Heart right ventricle (tissue), 16 donors: ENCODE measurements at regions of chr2 and their contacts with region 1.

Region 1: DNA sequence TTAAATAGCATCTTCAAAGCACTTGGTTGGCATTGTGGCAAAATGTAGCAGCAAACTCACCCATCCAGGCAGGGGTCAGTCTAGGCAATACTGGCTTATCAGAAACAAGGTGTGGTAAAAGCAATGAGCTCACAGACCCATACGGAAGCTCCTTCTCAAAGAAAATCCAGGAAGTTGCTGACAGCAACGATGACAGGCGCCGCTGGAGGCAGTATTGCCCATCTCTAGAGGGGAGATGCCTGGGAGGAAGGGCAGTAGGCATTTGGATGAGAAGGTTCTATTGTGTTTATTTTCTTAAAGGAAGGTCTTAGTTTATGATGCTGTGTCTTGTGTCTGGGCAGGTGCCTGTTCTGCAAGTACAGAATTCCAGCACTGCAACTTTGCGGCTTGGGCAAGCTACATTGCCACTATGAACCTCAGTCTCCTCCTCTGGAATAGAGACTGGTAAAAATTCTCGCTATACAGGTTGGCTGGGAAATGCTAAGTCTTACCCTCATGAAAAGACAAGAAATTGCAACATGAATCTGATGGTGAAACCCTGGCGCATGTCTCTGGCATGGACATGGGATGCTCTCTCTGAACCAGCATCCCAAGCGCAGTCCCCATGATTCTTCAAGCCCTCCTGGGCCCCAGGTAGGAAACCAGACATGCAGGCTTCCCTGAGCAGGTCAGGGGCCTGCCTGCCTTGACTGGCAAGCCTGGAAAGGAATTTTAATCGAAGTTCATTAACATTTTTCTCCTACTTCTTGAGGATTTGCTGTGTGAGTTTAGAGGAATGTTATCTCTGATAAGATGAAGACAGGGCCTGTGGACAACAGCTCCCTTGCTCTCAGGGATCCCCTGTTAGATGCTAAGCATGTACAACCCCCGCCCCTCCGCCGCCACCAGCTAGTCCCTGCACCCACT is 156.0 kb downstream of the TFCP2L1 start:
- DNase-seq: peak; percentile 25 to 33
- ATAC-seq: peak in 3 of 8 donors; percentile 31 to 44 (median 32)
- H3K4me3 ChIP-seq: no peak overlapping the region
- H3K27ac ChIP-seq: no peak overlapping the region
- H3K4me1 ChIP-seq: no peaks in the 10 kb centered on the region
- H3K27me3 ChIP-seq: peaks cover 0 to 4% (median 0%) of the 10 kb centered on the region in 7 donors
- CTCF ChIP-seq: peak; percentile 8 to 61 (median 55)

Region 2: GRCh38 chr2:121284463-121285449 is 155.7 kb after region 1 on chr2 and contains the start of gene TFCP2L1:
- intact Hi-C with region 1: loop called in 1 of 10 experiments (anchors 10 kb)
- DNase-seq: no peak
- ATAC-seq: peak in 4 of 8 donors; percentile 18 to 42 (median 40)
- H3K4me3 ChIP-seq: peak within 1 kb of the TSS; percentile 33 to 55 (median 46)
- H3K27ac ChIP-seq: no peak within 1 kb of the TSS
- H3K4me1 ChIP-seq: peaks cover 0 to 31% (median 12%) of the 10 kb centered on the region in 9 donors
- H3K27me3 ChIP-seq: peaks cover 10 to 53% (median 46%) of the 10 kb centered on the region in 7 donors
- CTCF ChIP-seq: no peak
- total RNA-seq, gene TFCP2L1: 0.02 to 0.60 (median 0.14) TPM in 9 of 10 donors, not detected in the other

Region 3: GRCh38 chr2:121345887-121346286 is 216.9 kb after region 1 on chr2:
- intact Hi-C with region 1: loop called in 1 of 10 experiments (anchors 10 kb)
- DNase-seq: no peak
- ATAC-seq: peak in 1 of 8 donors; percentile 49
- H3K4me3 ChIP-seq: no peak overlapping the region
- H3K27ac ChIP-seq: no peak overlapping the region
- H3K4me1 ChIP-seq: peaks cover 0 to 20% (median 5%) of the 10 kb centered on the region in 9 donors
- H3K27me3 ChIP-seq: no peaks in the 10 kb centered on the region
- CTCF ChIP-seq: no peak

Region 4: GRCh38 chr2:121356058-121356640 is 227.1 kb after region 1 on chr2:
- intact Hi-C with region 1: loop called in 1 of 10 experiments (anchors 5 kb)
- DNase-seq: no peak
- ATAC-seq: peak in 4 of 8 donors; percentile 29 to 43 (median 36)
- H3K4me3 ChIP-seq: no peak overlapping the region
- H3K27ac ChIP-seq: no peak overlapping the region
- H3K4me1 ChIP-seq: peaks cover 0 to 46% (median 15%) of the 10 kb centered on the region in 9 donors
- H3K27me3 ChIP-seq: no peaks in the 10 kb centered on the region
- CTCF ChIP-seq: peak; percentile 29 to 74 (median 66)

Region 5: DNA sequence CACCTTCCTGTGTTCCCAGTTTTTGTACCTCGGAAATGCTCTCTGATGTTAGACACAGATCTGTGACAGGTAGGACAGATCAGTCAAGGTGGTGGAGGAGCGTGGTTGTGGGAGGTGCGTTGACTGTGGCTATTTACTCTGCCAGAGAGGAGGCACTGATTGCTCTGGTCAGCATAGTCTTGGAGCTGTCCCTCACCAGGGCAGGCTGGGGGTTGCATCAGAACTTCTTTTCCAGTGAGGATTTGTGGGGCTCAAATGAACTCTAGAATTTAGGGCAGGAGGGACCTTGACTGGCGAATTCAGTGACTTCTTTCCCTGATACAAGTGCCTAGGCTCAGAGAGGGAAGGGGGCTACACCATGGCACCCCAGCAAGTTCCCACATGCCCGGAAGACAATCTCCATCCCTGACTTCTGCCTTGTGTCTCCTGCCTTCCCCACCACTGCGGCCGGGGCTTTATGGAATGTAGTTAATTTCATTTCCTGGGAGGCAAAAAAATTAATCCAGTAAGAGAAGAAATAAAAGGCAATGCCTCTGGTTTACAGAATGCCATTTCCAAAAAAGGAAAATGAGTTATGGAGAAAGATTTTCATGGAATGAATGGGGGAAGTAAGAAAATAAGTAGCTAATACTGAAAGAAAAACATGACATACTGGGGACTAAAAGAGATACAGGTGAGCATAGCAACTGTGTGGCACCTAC is 581.6 kb after region 1 on chr2:
- intact Hi-C with region 1: loop called in 1 of 10 experiments (anchors 10 kb)
- DNase-seq: no peak
- ATAC-seq: no peak
- H3K4me3 ChIP-seq: no peak overlapping the region
- H3K27ac ChIP-seq: no peak overlapping the region
- H3K4me1 ChIP-seq: peaks cover 0 to 1% (median 0%) of the 10 kb centered on the region in 9 donors
- H3K27me3 ChIP-seq: no peaks in the 10 kb centered on the region
- CTCF ChIP-seq: no peak